GM12878 (cell line): ENCODE measurements at regions of chr1 and their contacts with region 1.

Region 1: DNA sequence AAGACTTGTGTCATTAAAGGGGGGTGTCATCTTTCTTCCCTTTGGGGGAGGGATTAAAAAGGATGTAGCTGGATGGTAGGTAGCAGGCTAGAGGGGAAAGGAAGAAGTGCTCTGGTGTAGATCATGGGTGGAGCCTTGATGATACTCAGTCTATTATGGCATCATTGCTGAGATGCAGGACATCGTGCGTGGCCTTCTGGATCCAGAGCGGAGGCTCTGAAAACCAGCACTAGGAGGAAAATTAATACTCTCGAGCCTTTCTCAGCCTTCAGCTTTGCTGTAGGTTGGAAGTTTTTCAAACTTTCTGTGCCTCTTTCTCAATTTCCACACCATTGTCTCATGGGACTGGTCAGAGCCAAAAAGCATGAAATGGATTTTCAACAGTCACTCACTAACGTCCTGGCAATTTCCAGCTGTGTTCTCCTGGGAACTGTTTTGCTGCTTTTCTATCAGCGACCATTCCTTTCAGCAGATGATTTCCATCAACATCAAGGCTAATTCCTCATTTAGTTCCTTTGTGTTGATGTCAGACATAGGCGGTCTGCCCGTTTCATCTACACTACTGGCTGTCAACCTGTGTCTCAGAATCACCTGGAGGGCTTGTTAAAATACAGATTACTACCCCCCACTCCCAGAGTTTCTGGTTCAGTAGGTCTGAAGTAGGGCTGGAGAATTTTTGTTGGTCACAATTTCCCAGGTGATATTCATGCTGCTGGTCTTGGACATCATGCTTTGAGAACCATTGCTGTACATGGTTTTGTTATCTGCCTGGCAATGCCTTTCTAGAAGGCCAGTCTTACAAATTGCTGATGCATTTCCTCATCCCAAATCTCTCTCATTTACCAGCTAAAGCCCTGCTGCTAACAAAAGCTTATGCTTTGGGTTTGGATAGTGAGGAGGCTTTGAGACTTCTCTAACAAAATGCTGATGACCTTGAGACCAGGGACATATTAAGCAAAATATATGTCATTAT is 7.7 kb downstream of the CACNA1E start:
- DNase-seq: no peak
- ATAC-seq: no peak
- H3K4me3 ChIP-seq: peak overlapping the region; percentile 10; the same call in 1 of the 2 replicates
- H3K27ac ChIP-seq: no peak overlapping the region
- H3K4me1 ChIP-seq: 0 out of 2 replicates have a peak, but pooled peaks cover 6% of the 10 kb centered on the region
- H3K27me3 ChIP-seq: no peaks in the 10 kb centered on the region
- CTCF ChIP-seq: no peak
- EP300 ChIP-seq: no peak
- POLR2A ChIP-seq: no peak
- RAD21 ChIP-seq: no peak

Region 2: DNA sequence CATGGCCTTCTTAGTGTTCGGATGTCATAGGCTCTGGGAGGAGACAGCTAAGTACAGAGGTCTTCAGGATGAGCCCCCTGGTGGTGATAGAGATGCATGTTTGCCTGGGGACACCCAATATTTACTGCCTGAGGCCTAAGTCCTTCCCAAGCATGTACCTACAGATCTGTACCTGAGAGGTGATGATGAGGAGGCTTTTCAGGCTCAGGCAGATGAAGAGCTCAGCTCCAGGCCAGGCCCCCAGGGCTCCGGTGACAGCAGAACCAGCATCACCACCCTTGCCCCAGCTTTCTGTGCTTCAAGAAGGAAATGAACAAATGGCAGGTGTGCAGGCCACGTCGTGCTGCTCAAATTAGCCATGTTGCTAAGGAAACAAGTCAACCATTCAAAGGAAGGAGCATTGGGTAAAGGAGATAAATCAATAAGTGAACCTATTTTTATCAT is 13.4 kb after region 1 on chr1:
- CTCF ChIA-PET with region 1: interaction called, 157 read pairs
- POLR2A ChIA-PET with region 1: interaction called, 135 read pairs
- RAD21 ChIA-PET with region 1: interaction called, 278 read pairs
- SMC1A ChIA-PET with region 1: interaction called, 220 read pairs
- in situ Hi-C with region 1: no loop called
- intact Hi-C with region 1: no loop called
- DNase-seq: no peak
- ATAC-seq: peak; percentile 77
- H3K4me3 ChIP-seq: peak overlapping the region; percentile 14; the same call in 1 of the 2 replicates
- H3K27ac ChIP-seq: peak overlapping the region; percentile 88
- H3K4me1 ChIP-seq: peaks cover 60% of the 10 kb centered on the region
- H3K27me3 ChIP-seq: no peaks in the 10 kb centered on the region
- CTCF ChIP-seq: peak; percentile 50 to 73 (median 70)
- EP300 ChIP-seq: no peak
- POLR2A ChIP-seq: peak; percentile 42
- RAD21 ChIP-seq: peak; percentile 55

Region 3: GRCh38 chr1:181759481-181759880 is 268.5 kb after region 1 on chr1:
- CTCF ChIA-PET with region 1: no interaction called
- POLR2A ChIA-PET with region 1: no interaction called
- RAD21 ChIA-PET with region 1: no interaction called
- SMC1A ChIA-PET with region 1: no interaction called
- in situ Hi-C with region 1: no loop called
- intact Hi-C with region 1: no loop called
- DNase-seq: no peak
- ATAC-seq: no peak
- H3K4me3 ChIP-seq: no peak overlapping the region
- H3K27ac ChIP-seq: no peak overlapping the region
- H3K4me1 ChIP-seq: no peaks in the 10 kb centered on the region
- H3K27me3 ChIP-seq: no peaks in the 10 kb centered on the region
- CTCF ChIP-seq: no peak
- EP300 ChIP-seq: no peak
- POLR2A ChIP-seq: no peak
- RAD21 ChIP-seq: no peak